Right ventricle myocardium inferior (tissue), 1 donor: ENCODE measurements at regions of chr12 and their contacts with region 1.

Region 1: DNA sequence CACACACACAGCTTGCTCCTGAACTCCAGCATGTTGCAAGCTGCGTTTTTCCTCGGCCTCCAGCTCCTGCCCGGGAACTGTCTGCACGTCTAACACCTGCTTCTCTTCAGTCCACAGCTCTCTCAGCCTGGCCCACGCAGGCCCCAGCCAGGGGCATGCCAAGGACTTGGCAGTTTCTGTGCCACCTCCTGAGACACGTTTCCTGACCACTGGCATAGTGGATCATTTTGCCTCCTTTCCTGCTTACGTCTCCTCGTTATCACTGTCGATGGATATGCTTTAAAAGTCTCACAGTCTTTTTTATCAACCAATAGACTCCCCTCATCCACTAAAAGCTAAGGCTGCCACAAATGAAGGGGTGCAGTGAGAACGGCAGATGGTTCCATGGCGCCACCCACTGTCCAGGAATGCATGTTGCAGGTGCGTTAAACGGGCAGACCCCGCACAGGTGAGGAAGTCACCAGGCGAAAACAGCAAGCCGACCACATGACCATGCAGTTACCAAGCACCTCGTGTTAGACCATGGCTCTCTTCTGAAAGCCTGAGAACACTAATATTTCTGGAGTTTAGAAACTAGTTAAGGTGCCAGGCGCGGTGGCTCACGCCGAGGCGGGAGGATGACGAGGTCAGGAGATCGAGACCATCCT is 14.7 kb upstream of the TEAD4 start:
- DNase-seq: no peak
- ATAC-seq: peak; percentile 84

Region 2: GRCh38 chr12:2853626-2854025 is 90.9 kb before region 1 on chr12:
- intact Hi-C with region 1: loop called (anchors 1 kb)
- DNase-seq: peak; percentile 86
- ATAC-seq: peak; percentile 89

Region 3: GRCh38 chr12:2884810-2885209 is 59.7 kb before region 1 on chr12:
- intact Hi-C with region 1: loop called (anchors 5 kb)
- DNase-seq: no peak
- ATAC-seq: no peak

Region 4: GRCh38 chr12:3046446-3047200 is 102.1 kb after region 1 on chr12:
- intact Hi-C with region 1: no loop called
- DNase-seq: no peak
- ATAC-seq: peak; percentile 88

Region 5: GRCh38 chr12:3319723-3320492 is 375.4 kb after region 1 on chr12:
- intact Hi-C with region 1: no loop called
- DNase-seq: no peak
- ATAC-seq: no peak